ENCODE measurements at regions of chr7 and their contacts with region 1.

Region 1: GRCh38 chr7:137656227-137656849 is 190.4 kb downstream of the DGKI start:
- DNase-seq: no peak
- H3K4me3 ChIP-seq: no peak overlapping the region
- CTCF ChIP-seq: peak; percentile 83

Region 2: GRCh38 chr7:137636376-137636775 is 20.0 kb before region 1 on chr7:
- CTCF ChIA-PET with region 1: interaction called, 19 read pairs
- POLR2A ChIA-PET with region 1: no interaction called
- DNase-seq: no peak
- H3K4me3 ChIP-seq: no peak overlapping the region
- CTCF ChIP-seq: no peak

Region 3: DNA sequence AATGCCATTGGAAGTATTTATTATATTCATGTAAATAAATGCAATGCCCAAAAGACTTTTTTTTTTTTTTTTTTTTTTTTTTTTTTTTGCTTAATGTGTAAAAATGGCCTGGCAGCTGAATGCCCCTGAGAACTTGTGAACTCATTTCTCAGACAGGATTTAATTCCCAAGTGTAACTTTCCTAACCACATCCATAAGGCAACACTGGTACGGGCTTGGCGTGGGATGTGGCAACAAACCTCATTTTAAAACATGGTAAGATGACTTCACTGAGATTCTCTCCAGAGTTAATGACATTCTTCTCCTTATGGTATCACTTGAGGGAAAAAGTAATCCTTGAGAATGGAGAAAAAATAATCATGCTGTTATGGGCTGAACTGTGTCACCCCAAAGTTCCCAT is 40.0 kb after region 1 on chr7:
- CTCF ChIA-PET with region 1: interaction called, 10 read pairs
- POLR2A ChIA-PET with region 1: no interaction called
- DNase-seq: no peak
- H3K4me3 ChIP-seq: no peak overlapping the region
- CTCF ChIP-seq: no peak

Region 4: DNA sequence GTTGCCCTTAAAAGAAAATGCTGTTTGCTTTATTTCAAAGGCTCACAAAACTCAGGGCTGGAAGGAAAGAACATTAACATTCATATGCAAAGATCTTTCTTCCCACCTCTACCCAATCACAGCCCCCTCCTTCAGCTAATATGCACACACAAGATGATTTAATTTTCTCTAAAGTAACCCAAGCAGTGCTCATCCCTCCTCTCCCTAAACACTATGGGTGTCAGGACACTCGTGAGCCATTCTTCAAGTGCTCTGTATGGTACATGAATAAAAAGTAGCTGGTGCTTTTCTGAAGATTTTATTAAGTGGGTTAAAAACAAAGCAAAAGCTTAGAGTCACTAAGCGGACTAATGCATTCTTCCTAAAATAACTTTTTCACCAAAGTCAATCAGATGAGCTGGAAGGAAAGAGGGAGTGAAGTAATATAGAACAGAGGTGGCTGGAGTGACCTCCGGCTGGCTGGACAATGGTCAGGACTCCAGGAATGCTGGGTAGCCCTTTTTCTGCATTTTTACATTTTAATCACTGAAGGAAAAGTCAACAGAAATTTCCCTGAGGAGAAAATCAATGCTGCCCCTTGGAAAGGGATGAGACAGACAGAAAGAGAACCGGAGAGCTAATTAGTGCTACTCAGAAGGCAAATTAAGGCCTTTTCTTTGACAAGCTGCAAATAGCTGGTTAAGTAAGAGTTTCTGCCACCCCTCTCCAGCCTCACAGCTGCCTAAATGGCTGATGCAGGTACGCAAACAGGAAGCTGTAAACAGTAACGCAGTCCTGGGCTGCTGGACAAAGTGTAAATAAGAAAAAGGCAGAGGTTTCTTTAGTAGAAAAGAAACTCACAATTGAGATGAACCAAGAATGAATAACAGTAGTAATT is 183.8 kb after region 1 on chr7:
- CTCF ChIA-PET with region 1: interaction called, 17 read pairs
- POLR2A ChIA-PET with region 1: no interaction called
- DNase-seq: no peak
- H3K4me3 ChIP-seq: no peak overlapping the region
- CTCF ChIP-seq: no peak

Region 5: DNA sequence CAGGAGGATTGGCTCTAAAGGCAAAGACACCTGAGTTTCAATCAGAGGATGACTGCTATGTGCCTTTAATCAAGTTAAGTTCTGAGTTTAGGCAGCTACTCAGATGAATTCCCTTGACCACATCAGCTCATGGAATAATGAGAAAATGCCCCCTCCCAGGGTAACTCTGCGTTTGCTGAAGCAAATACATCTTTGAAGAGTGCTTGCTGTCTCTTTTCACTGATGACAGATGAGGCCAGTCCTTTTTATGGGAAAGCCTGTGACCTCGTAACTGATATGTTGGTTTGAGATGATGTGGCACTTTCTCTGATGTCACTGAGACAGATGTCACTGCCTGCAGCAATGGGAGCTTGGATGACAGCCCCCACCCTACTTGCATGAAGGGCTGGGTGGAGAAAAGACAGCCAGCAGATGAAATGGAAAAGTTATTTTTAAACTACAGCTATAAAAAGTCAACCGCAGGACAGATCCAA is 234.1 kb after region 1 on chr7:
- CTCF ChIA-PET with region 1: interaction called, 84 read pairs
- POLR2A ChIA-PET with region 1: no interaction called
- DNase-seq: no peak
- H3K4me3 ChIP-seq: no peak overlapping the region
- CTCF ChIP-seq: no peak

Region 6: GRCh38 chr7:138008547-138009349 is 352.4 kb after region 1 on chr7:
- CTCF ChIA-PET with region 1: interaction called, 48 read pairs
- POLR2A ChIA-PET with region 1: no interaction called
- DNase-seq: no peak
- H3K4me3 ChIP-seq: no peak overlapping the region
- CTCF ChIP-seq: peak; percentile 66

Region 7: GRCh38 chr7:138077809-138078208 is 421.5 kb after region 1 on chr7:
- CTCF ChIA-PET with region 1: no interaction called
- POLR2A ChIA-PET with region 1: no interaction called
- DNase-seq: no peak
- H3K4me3 ChIP-seq: no peak overlapping the region
- CTCF ChIP-seq: no peak